PC-3 (cell line): ENCODE measurements at regions of chr14 and their contacts with region 1.

Region 1: DNA sequence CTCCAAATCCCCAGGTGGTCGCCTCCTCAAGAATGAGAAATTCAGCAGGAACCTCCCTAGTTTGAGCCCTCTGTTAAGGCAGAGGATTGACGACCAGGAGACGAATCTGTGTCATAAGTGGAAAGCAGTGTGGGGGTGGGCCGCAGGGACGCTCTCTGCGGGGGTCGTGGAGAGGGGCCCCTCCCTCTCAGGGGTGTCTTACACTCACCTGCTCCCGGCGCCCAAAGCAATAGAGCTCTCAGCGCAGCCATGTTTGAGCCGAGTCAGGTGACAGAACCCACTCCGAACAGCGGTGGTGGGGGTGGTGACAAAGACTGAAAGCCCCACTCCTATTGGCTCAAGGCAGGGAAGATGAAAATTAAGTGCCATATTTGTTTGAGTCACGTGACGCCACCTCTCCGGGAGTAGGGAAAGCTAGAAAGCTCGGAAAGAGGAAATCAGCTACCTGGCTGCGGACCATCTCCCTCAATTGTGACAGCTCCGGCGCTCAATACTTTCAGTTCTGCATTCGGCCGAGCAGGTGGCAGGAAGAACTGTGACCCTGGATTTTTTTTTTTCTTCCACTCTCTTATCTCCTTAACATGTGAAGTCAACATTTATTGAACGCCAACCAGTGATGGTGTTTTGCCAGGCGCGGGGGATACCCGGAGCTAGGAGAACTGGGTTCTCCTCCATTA is at the start of gene ZFYVE26:
- DNase-seq: peak; percentile 98
- ATAC-seq: peak; percentile 94
- H3K4me3 ChIP-seq: peak within 1 kb of the TSS; percentile 82
- H3K27ac ChIP-seq: peak within 1 kb of the TSS; percentile 24
- H3K4me1 ChIP-seq: peaks cover 28% of the 10 kb centered on the region
- H3K27me3 ChIP-seq: no peaks in the 10 kb centered on the region
- CTCF ChIP-seq: no peak
- total RNA-seq, gene ZFYVE26: 20.0 and 21.1 TPM in 2 replicates

Region 2: DNA sequence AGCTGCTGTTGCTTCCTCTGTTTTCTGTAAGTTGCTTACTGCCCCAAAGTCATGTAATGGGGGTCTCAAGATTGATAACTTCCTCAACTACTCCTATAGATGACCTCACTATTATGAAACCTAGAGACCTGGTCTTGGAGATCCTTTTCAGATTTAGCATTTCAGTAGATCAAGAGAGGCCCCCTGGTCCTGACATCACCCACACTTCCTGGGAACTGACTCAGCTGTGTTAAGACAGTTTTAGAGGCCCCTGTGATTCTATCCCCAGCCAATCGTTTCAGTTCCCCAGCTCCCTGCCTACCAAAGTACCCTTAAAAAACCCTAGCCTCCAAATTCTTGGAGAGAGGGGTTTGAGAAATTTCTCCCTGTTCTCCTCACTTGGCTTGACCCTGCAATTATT is 206.0 kb before region 1 on chr14:
- CTCF ChIA-PET with region 1: no interaction called
- POLR2A ChIA-PET with region 1: interaction called, 14 read pairs
- intact Hi-C with region 1: no loop called
- DNase-seq: no peak
- ATAC-seq: no peak
- H3K4me3 ChIP-seq: no peak overlapping the region
- H3K27ac ChIP-seq: no peak overlapping the region
- H3K4me1 ChIP-seq: no peaks in the 10 kb centered on the region
- H3K27me3 ChIP-seq: no peaks in the 10 kb centered on the region
- CTCF ChIP-seq: no peak